B cell (primary cell): ENCODE measurements at regions of chr2 and their contacts with region 1.

Region 1: GRCh38 chr2:55050133-55050994 is at the start of gene RTN4:
- DNase-seq: peak; percentile 99
- ATAC-seq: peak; percentile 85
- H3K4me3 ChIP-seq: peak within 1 kb of the TSS; percentile 67 to 95 (median 89)
- H3K4me3 Mint-ChIP-seq: peak within 1 kb of the TSS; percentile 100
- H3K27ac ChIP-seq: peak within 1 kb of the TSS; percentile 82 to 89
- H3K27ac Mint-ChIP-seq: peak within 1 kb of the TSS; percentile 100
- H3K4me1 ChIP-seq: peaks cover 48 to 52% of the 10 kb centered on the region in 2 donors
- H3K4me1 Mint-ChIP-seq: peaks cover 71% of the 10 kb centered on the region
- H3K27me3 ChIP-seq: no peaks in the 10 kb centered on the region
- H3K27me3 Mint-ChIP-seq: no peaks in the 10 kb centered on the region
- CTCF ChIP-seq: no peak
- total RNA-seq, gene RTN4: 63.3 and 65.9 TPM in 2 replicates

Region 2: DNA sequence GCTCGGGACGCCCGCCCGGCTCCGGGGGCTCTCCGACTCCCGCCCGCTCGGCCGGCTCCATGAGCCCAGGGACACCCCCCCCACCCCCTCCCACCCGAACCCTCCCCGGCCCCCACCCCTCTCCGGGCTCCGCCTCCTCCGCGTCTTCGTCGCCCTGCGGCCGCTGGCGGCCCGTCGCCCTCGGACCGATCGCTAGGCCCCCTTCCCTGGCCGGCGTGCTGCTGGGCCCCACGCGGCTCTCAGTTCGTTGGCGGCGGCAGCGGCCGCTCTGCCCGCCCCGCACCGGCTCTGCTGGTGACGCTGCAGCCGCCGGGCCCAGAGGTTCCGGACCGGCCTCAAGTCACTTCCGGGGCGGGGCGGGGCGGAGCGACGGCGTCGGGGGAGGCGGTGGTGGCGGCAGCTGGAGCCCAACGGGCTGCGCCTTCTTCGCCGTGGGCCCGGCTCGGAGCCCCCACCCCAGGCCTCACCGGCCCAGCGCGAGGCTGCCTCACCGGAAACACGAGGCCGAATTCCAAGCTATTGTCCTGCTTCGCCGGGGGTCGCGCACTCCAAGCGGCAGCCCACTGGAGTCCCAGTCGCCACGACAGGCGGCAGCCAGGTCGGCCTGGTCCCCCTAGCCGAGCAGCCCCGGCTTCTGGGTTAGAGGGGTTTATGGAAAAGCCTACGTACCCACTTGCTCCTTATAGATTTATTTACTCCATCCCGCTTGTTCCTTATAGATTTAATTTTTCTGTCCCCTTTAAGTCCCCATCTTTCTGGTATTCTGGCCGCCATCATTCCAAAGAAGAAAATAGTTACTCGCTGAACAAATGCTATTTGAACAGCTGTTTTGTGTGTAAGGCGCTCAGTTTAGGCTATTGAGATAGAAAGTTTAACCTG is 1079.4 kb before region 1 on chr2 and contains the start of gene PSME4:
- CTCF ChIA-PET with region 1: no interaction called
- POLR2A ChIA-PET with region 1: interaction called, 3 read pairs
- intact Hi-C with region 1: loop called (anchors 5 kb)
- DNase-seq: peak; percentile 93
- ATAC-seq: peak; percentile 89
- H3K4me3 ChIP-seq: peak within 1 kb of the TSS; percentile 71 to 98 (median 95)
- H3K4me3 Mint-ChIP-seq: peak within 1 kb of the TSS; percentile 94
- H3K27ac ChIP-seq: peak within 1 kb of the TSS; percentile 71 to 89
- H3K27ac Mint-ChIP-seq: peak within 1 kb of the TSS; percentile 91
- H3K4me1 ChIP-seq: peaks cover 31 to 33% of the 10 kb centered on the region in 2 donors
- H3K4me1 Mint-ChIP-seq: peaks cover 47% of the 10 kb centered on the region
- H3K27me3 ChIP-seq: no peaks in the 10 kb centered on the region
- H3K27me3 Mint-ChIP-seq: no peaks in the 10 kb centered on the region
- CTCF ChIP-seq: no peak
- total RNA-seq, gene PSME4: 59.9 and 61.9 TPM in 2 replicates

Region 3: GRCh38 chr2:54570925-54571694 is 479.3 kb before region 1 on chr2:
- CTCF ChIA-PET with region 1: no interaction called
- POLR2A ChIA-PET with region 1: no interaction called
- intact Hi-C with region 1: loop called (anchors 5 kb)
- DNase-seq: peak; percentile 83
- ATAC-seq: peak; percentile 42
- H3K4me3 ChIP-seq: peak overlapping the region in 3 of 5 experiments; percentile 1 to 56 (median 32)
- H3K4me3 Mint-ChIP-seq: peak overlapping the region; percentile 83
- H3K27ac ChIP-seq: peak overlapping the region; percentile 92 to 93
- H3K27ac Mint-ChIP-seq: peak overlapping the region; percentile 97
- H3K4me1 ChIP-seq: peaks cover 92 to 93% of the 10 kb centered on the region in 2 donors
- H3K4me1 Mint-ChIP-seq: peaks cover 92% of the 10 kb centered on the region
- H3K27me3 ChIP-seq: no peaks in the 10 kb centered on the region
- H3K27me3 Mint-ChIP-seq: no peaks in the 10 kb centered on the region
- CTCF ChIP-seq: no peak

Region 4: DNA sequence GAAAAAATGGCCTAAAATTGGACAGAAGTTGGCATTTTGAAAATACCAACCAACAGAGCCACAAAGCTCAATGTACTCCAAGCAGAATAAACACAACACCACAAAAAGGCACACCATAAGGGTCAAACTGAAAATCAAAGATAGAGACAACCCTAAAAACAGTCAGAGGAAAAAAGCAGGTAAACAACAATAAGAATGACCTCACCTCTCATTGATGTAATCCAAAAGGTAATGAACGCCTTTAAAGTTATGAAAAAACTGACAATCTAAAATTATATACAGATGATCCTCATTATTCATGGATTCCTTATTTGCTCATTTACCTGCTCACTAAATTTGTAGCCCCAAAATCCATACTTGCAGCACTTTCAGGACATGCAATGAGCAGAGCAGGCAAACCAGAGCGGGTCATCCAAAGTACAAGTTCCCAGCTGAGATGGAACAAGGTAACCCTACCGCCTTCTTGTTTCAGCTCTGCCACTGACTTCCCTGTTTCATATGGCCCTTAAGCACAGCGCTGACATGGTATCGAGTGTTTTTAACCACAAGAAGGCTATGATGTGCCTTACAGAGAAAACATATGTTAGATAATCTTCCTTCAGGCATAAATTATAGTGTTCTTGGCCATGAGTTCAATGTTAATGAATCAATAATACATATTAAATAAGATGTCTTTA is 17.2 kb before region 1 on chr2:
- CTCF ChIA-PET with region 1: interaction called, 9 read pairs
- POLR2A ChIA-PET with region 1: interaction called, 4 read pairs
- intact Hi-C with region 1: loop called (anchors 2 kb)
- DNase-seq: peak; percentile 59
- ATAC-seq: peak; percentile 87
- H3K4me3 ChIP-seq: no peak overlapping the region
- H3K4me3 Mint-ChIP-seq: no peak overlapping the region
- H3K27ac ChIP-seq: no peak overlapping the region
- H3K27ac Mint-ChIP-seq: no peak overlapping the region
- H3K4me1 ChIP-seq: peaks cover 10 to 17% of the 10 kb centered on the region in 2 donors
- H3K4me1 Mint-ChIP-seq: peaks cover 43% of the 10 kb centered on the region
- H3K27me3 ChIP-seq: no peaks in the 10 kb centered on the region
- H3K27me3 Mint-ChIP-seq: no peaks in the 10 kb centered on the region
- CTCF ChIP-seq: no peak

Region 5: DNA sequence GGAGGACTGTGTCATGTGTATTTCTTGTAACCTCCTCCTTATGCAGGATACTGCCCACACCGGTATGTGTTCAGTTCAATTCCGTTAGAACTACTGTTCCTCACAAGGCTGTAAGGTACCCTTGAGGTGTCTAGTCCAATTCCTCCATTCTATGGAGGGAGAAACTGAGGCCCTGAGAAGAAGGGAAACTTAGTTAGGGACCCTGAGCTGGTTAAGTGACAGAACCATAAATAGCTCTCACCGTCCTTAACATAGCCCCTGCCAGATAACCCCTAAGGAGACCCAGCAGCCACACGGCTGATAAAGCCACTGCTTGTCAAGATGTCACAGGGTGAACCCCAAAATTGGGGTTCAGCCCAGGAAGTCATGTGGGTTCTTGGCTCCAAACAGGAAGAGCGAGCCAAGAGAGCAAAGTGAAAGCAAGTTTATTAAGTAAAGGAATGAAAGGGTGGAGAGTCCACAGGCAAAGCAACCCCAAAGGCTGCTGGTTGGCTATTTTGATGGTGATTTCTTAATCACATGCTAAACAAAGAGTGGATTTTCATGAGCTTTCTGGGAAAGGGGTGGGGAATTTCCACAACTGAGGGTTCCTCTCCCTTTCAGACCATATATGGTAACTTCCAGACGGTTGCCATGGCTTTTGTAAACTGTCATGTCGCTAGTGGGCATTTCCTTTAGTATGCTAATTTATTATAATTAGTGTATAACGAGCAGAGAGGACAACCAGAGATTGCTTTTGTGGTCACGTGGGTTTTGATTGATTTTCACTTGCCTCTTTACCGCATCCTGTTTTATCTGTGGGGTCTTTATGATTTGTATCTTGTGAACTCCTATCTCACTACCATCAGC is 83.3 kb after region 1 on chr2:
- CTCF ChIA-PET with region 1: interaction called, 6 read pairs
- POLR2A ChIA-PET with region 1: interaction called, 3 read pairs
- intact Hi-C with region 1: loop called (anchors 1 kb)
- DNase-seq: peak; percentile 89
- ATAC-seq: peak; percentile 78
- H3K4me3 ChIP-seq: peak overlapping the region; percentile 24 to 68 (median 49)
- H3K4me3 Mint-ChIP-seq: peak overlapping the region; percentile 95
- H3K27ac ChIP-seq: peak overlapping the region; percentile 75 to 91
- H3K27ac Mint-ChIP-seq: peak overlapping the region; percentile 94
- H3K4me1 ChIP-seq: peaks cover 27 to 41% of the 10 kb centered on the region in 2 donors
- H3K4me1 Mint-ChIP-seq: peaks cover 34% of the 10 kb centered on the region
- H3K27me3 ChIP-seq: no peaks in the 10 kb centered on the region
- H3K27me3 Mint-ChIP-seq: no peaks in the 10 kb centered on the region
- CTCF ChIP-seq: no peak

Region 6: GRCh38 chr2:55168221-55169154 is 118.1 kb after region 1 on chr2:
- CTCF ChIA-PET with region 1: interaction called, 31 read pairs
- POLR2A ChIA-PET with region 1: no interaction called
- intact Hi-C with region 1: no loop called
- DNase-seq: peak; percentile 68
- ATAC-seq: peak; percentile 57
- H3K4me3 ChIP-seq: no peak overlapping the region
- H3K4me3 Mint-ChIP-seq: no peak overlapping the region
- H3K27ac ChIP-seq: no peak overlapping the region
- H3K27ac Mint-ChIP-seq: no peak overlapping the region
- H3K4me1 ChIP-seq: no peaks in the 10 kb centered on the region
- H3K4me1 Mint-ChIP-seq: no peaks in the 10 kb centered on the region
- H3K27me3 ChIP-seq: no peaks in the 10 kb centered on the region
- H3K27me3 Mint-ChIP-seq: no peaks in the 10 kb centered on the region
- CTCF ChIP-seq: peak; percentile 81

Region 7: GRCh38 chr2:55282110-55282917 is 231.9 kb after region 1 on chr2:
- CTCF ChIA-PET with region 1: no interaction called
- POLR2A ChIA-PET with region 1: no interaction called
- intact Hi-C with region 1: loop called (anchors 5 kb)
- DNase-seq: peak; percentile 91
- ATAC-seq: peak; percentile 99
- H3K4me3 ChIP-seq: peak overlapping the region; percentile 76 to 92 (median 87)
- H3K4me3 Mint-ChIP-seq: peak overlapping the region; percentile 93
- H3K27ac ChIP-seq: peak overlapping the region; percentile 82 to 89
- H3K27ac Mint-ChIP-seq: peak overlapping the region; percentile 99
- H3K4me1 ChIP-seq: peaks cover 11 to 18% of the 10 kb centered on the region in 2 donors
- H3K4me1 Mint-ChIP-seq: peaks cover 24% of the 10 kb centered on the region
- H3K27me3 ChIP-seq: no peaks in the 10 kb centered on the region
- H3K27me3 Mint-ChIP-seq: no peaks in the 10 kb centered on the region
- CTCF ChIP-seq: no peak